OCI-LY7 (cell line): ENCODE measurements at regions of chr2 and their contacts with region 1.

Region 1: DNA sequence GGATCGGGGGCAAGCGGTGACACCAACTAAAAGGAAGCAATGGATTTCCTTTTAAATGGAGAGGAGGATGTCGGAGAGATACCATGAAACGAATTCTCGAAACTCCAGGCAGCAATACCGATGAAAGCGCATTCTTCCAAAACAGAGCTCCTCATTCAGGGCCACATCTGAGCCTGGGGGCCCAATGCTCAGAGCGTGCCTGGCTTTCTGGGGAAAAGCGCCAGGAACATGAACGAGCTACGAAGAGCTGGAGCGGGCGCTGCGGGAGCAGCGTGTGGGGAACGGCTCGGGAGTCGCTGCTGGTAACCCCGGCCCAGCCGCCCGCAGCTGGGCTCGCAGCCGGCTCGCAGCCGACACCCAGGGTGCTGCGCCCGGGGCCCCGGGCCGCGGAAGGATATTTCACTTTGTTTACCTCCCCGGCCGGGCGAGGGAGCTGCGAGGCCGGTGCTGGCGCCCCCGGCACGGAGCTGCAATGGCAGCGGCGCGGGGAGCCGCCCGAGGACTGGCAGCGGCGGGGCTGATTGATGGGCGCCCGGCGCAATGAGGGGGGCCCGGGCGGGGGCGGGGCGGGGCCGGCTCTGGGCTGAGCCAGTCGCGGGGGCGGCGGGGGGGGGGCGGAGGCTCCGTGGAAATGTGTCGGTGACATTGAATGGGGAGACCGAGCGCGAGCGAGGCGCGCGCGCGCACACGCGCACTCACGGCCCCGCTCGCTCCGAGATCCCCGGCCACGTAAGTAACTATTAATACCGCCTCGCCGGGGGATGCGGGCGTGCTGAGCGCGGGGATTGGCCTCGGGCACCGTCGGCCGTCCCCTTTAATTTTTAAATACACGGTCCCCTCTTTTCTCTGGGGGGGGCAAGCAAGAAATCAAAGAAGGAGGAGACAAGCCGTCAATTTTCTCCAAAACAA is at the start of gene TRIB2:
- DNase-seq: peak; percentile 96
- H3K4me3 ChIP-seq: peak within 1 kb of the TSS; percentile 81
- H3K27ac ChIP-seq: peak within 1 kb of the TSS; percentile 45
- H3K4me1 ChIP-seq: peaks cover 40% of the 10 kb centered on the region
- CTCF ChIP-seq: peak; percentile 61
- total RNA-seq, gene TRIB2: 11.8 and 18.8 TPM in 2 replicates

Region 2: GRCh38 chr2:11753886-11754699 is 962.4 kb before region 1 on chr2:
- CTCF ChIA-PET with region 1: no interaction called
- POLR2A ChIA-PET with region 1: interaction called, 3 read pairs
- intact Hi-C with region 1: loop called (anchors 1 kb)
- DNase-seq: peak; percentile 63
- H3K4me3 ChIP-seq: peak overlapping the region; percentile 62
- H3K27ac ChIP-seq: peak overlapping the region; percentile 95
- H3K4me1 ChIP-seq: peaks cover 87% of the 10 kb centered on the region
- CTCF ChIP-seq: no peak

Region 3: GRCh38 chr2:12050396-12050795 is 666.1 kb before region 1 on chr2:
- CTCF ChIA-PET with region 1: no interaction called
- POLR2A ChIA-PET with region 1: interaction called, 3 read pairs
- intact Hi-C with region 1: loop called (anchors 2 kb)
- DNase-seq: peak; percentile 84
- H3K4me3 ChIP-seq: peak overlapping the region; percentile 1
- H3K27ac ChIP-seq: peak overlapping the region; percentile 90
- H3K4me1 ChIP-seq: peaks cover 66% of the 10 kb centered on the region
- CTCF ChIP-seq: peak; percentile 77

Region 4: DNA sequence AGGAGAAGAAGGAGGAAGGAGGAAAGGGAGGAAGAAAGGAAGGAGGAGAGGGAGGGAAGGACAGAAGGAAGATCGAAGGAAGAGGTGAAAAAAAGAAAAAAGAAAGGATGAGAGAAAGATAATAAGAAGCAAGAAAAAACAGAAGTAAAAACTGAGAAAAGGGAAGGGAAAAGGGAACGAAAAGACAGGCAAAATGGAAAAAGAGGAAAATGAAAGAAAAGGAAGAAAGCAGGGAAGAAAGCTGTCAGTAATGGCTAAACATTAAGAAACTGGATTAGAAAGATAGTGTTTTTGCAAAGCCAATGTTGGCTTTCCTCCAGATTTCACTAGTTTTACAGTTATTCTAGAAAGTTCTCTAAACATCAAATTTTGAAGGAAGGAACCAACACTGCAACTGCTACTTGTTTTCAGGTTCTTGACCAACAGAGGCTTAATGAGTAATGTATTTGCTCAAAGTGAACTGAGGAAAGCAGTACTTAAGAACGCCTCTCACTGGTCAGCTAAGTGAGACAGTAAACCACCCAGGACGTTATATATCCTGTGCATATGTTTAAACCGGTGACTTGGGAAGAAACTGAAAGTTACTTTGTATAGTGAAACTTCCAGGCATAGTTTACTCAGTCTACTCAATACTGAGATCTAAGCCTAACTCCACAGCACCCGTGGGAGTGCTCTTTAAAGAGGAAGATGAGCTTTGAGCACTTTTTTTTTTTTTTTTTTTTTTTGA is 286.0 kb before region 1 on chr2:
- CTCF ChIA-PET with region 1: interaction called, 4 read pairs
- POLR2A ChIA-PET with region 1: no interaction called
- intact Hi-C with region 1: loop called (anchors 1 kb)
- DNase-seq: peak; percentile 1
- H3K4me3 ChIP-seq: no peak overlapping the region
- H3K27ac ChIP-seq: no peak overlapping the region
- H3K4me1 ChIP-seq: no peaks in the 10 kb centered on the region
- CTCF ChIP-seq: no peak

Region 5: DNA sequence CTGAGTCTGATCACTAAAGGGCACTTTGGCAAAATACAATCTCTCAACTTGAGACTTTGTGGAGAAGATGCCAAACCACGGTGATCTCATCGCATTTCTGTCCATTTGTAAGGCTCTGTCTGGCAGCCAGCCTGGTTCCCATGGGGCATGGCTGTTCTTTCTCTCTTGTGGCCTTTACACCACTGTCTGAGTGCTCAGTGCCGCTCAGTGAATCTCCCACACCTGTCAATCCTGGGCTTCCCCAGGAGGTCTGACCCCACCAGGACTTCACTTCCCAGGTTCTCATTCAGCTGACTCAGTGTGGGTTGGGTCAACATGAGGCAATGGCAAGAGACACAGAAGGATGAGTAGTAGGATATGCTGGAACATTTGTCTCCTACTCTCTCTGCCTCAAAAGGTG is 96.6 kb before region 1 on chr2:
- CTCF ChIA-PET with region 1: no interaction called
- POLR2A ChIA-PET with region 1: no interaction called
- intact Hi-C with region 1: loop called (anchors 5 kb)
- DNase-seq: no peak
- H3K4me3 ChIP-seq: no peak overlapping the region
- H3K27ac ChIP-seq: no peak overlapping the region
- H3K4me1 ChIP-seq: peaks cover 20% of the 10 kb centered on the region
- CTCF ChIP-seq: no peak

Region 6: DNA sequence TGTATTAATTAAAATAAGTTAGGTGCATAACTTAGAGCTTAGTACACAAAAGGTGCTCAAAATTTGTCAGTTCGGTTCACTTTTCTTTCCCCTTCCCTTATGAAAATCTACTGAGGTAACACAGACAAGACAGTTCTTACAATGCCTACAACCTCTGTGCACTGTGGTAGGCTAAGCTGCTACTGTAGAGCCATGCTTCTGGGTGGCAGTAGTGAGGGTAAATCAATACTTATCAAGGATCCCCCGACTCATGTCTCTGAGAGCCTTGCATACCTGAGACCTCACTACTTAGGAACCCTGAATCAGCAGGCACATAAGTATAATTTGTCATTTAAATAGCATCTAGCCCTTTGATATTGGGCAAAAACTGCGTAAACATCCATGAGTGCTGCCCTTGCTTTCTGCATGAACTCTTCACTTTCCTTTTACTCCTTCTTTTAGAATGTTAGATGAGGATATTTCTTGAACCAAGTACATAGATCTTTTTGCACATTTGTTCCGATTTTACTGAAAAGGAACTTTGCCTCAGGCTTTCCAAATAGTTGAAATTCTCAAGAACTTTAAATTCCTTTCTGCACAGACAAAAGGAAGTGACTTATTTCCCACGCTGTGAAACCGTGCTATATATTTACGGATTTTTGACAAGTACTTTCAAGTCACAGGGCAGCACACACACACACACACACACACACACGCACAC is 234.6 kb after region 1 on chr2:
- CTCF ChIA-PET with region 1: no interaction called
- POLR2A ChIA-PET with region 1: no interaction called
- intact Hi-C with region 1: no loop called
- DNase-seq: no peak
- H3K4me3 ChIP-seq: no peak overlapping the region
- H3K27ac ChIP-seq: no peak overlapping the region
- H3K4me1 ChIP-seq: no peaks in the 10 kb centered on the region
- CTCF ChIP-seq: no peak

Region 7: DNA sequence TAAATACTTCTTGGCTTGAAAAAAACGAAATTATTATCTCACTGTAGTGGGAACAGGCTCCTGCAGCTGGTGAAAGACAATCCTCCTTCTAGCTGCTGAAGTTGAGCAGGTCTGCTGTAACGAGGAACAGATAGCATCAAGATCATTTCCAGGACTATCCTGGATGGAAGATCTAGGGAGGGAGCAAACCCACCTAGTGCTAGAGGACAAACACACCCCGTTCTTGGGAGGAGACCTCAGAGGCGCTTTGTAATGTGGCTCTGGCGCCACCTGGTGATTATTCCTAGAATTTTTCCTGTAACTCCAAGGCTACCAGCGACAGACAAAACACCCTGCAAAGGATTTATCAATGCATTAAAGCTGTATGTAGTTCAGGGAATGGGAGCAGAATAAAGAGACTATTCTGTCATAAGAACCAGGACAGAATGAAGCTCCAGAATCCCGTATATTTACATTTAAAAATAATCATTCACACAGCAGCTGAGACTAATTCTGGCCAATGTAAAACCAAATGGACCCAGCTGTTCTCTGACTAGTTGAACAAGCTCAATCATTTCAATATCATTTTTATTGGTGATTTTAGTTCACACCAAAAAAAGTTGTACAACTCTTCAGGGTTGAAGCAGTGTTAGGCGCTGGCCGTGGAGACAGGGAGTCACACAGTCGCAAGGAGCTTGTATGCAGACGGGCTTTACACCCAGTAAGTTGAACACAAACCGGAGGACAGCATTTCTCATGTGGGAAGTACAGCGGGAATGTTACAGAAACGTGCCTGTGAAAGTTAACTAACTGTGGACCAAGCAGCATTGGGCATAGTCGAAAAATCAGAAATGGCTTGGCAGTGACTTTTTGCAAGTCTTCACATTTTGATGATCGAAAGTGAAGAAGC is 290.5 kb after region 1 on chr2:
- CTCF ChIA-PET with region 1: no interaction called
- POLR2A ChIA-PET with region 1: interaction called, 4 read pairs
- intact Hi-C with region 1: loop called (anchors 2 kb)
- DNase-seq: peak; percentile 61
- H3K4me3 ChIP-seq: no peak overlapping the region
- H3K27ac ChIP-seq: no peak overlapping the region
- H3K4me1 ChIP-seq: no peaks in the 10 kb centered on the region
- CTCF ChIP-seq: peak; percentile 90